Activated B cell treated with CpG ODN at 0.5 μM for 24 hours (primary cell): ENCODE measurements at regions of chr7 and their contacts with region 1.

Region 1: DNA sequence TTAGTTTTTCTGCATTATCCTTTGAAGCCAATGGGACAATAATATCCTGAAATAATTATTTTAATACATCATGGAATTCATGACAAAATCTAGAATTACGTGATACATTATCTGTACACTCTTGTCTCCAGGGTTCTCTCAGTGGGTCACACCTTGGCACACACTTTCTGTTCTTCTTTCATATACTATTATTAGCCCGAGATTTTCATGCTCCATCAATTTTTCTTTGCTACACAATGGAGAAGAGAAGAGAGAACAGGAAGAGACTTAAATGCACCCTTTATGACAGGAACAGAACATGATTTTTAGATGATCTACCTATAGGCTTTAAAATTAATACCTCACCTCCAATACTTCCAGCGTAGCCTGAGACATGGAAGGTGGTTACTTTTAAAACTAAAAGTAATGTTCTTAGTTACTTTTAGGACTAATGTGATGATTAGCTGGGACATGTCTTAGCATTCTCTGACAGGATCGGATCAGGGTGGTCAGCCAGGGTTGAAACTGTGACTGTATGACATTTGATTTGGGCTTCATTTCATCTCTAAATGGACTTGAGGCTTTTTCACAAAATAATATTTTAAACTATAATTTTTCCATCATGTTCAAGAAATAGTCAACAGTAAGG is 148.2 kb upstream of the WNT16 start:
- DNase-seq: no peak
- ATAC-seq: peak; percentile 89
- H3K4me3 Mint-ChIP-seq: peak overlapping the region; percentile 29
- H3K27ac Mint-ChIP-seq: peak overlapping the region; percentile 91
- H3K4me1 Mint-ChIP-seq: peaks cover 83% of the 10 kb centered on the region
- H3K27me3 Mint-ChIP-seq: no peaks in the 10 kb centered on the region
- CTCF ChIP-seq: no peak

Region 2: DNA sequence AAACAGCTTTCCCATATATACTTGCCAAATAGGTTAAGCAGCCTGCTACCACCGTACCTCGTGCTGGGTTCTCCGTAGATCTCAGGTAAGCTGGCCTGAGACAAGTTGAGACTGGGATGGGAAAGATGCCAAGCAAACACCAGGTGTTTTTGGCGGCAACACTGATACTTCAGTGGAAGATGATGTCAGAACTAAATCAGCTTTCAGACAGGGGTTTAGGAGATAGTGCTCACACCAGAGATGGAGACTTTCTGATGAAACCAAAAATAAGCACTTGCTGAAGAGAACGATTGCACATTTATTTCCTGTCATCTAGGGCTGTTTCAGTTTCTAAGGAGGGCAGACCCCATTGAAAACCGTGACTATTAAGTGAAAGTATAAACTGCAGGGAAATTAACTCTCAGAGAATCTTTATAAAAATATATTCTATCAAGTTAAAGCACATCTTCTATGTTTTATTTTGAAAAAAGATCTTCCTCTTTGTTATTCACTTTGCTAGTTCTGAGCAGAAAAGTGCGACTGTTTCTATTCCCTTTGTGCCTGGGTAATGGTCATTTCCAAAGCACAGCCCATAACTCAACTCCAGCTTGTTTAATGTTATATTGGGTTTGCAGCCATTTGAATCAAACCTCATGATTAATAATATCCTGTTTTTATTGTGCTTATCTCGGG is 42.2 kb before region 1 on chr7:
- CTCF ChIA-PET with region 1: no interaction called
- POLR2A ChIA-PET with region 1: interaction called, 6 read pairs
- intact Hi-C with region 1: loop called (anchors 1 kb)
- DNase-seq: peak; percentile 26
- ATAC-seq: peak; percentile 96
- H3K4me3 Mint-ChIP-seq: peak overlapping the region; percentile 94
- H3K27ac Mint-ChIP-seq: peak overlapping the region; percentile 96
- H3K4me1 Mint-ChIP-seq: peaks cover 30% of the 10 kb centered on the region
- H3K27me3 Mint-ChIP-seq: no peaks in the 10 kb centered on the region
- CTCF ChIP-seq: no peak

Region 3: GRCh38 chr7:121192834-121193233 is 12.3 kb after region 1 on chr7:
- CTCF ChIA-PET with region 1: no interaction called
- POLR2A ChIA-PET with region 1: interaction called, 9 read pairs
- intact Hi-C with region 1: loop called (anchors 1 kb)
- DNase-seq: no peak
- ATAC-seq: no peak
- H3K4me3 Mint-ChIP-seq: no peak overlapping the region
- H3K27ac Mint-ChIP-seq: no peak overlapping the region
- H3K4me1 Mint-ChIP-seq: peaks cover 35% of the 10 kb centered on the region
- H3K27me3 Mint-ChIP-seq: no peaks in the 10 kb centered on the region
- CTCF ChIP-seq: no peak

Region 4: GRCh38 chr7:121214657-121215056 is 34.1 kb after region 1 on chr7:
- CTCF ChIA-PET with region 1: no interaction called
- POLR2A ChIA-PET with region 1: no interaction called
- intact Hi-C with region 1: no loop called
- DNase-seq: no peak
- ATAC-seq: no peak
- H3K4me3 Mint-ChIP-seq: no peak overlapping the region
- H3K27ac Mint-ChIP-seq: no peak overlapping the region
- H3K4me1 Mint-ChIP-seq: peaks cover 25% of the 10 kb centered on the region
- H3K27me3 Mint-ChIP-seq: no peaks in the 10 kb centered on the region
- CTCF ChIP-seq: no peak

Region 5: DNA sequence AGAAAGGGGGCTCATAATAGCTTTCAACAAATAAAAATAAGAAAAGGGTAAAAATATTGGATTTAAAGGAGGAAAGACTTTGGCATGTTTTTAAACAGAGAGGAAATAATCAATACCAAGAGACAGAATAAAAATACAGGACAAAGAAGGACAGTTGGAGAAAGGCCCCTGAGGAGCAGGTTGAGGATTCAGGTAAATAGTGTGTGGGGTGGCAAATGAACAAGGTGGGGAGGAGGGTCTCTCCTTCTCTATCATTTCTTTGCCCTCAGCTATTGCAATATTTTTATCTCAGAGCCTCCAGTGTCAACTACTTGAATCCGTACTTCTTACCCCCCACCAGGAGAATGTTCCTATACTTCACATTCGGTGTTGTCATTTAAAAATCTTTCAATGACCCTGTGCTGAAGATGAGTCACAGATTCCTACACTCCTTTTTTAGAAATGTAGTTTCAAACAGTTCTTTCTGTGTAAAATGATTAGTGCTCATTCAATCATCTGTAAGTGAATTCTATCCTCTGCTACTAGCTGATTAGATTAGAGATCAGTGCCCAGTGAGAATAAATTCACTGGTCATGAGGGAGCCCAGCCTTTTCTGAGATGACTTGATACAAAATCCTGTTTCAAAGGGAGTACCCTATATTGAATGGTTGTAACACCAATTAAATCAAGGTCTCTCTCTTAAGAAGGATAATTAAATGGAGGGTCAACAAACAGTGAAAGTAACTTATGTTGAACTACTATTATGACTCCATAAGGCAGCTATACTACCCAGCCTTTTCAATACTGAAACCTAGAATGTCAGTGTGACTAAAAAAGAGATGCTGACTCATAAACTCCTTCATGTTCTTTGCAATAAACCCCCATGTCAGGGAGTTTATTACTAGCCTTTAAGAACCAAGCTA is 97.8 kb after region 1 on chr7:
- CTCF ChIA-PET with region 1: no interaction called
- POLR2A ChIA-PET with region 1: interaction called, 4 read pairs
- intact Hi-C with region 1: loop called (anchors 2 kb)
- DNase-seq: no peak
- ATAC-seq: peak; percentile 85
- H3K4me3 Mint-ChIP-seq: no peak overlapping the region
- H3K27ac Mint-ChIP-seq: peak overlapping the region; percentile 68
- H3K4me1 Mint-ChIP-seq: peaks cover 50% of the 10 kb centered on the region
- H3K27me3 Mint-ChIP-seq: no peaks in the 10 kb centered on the region
- CTCF ChIP-seq: no peak

Region 6: DNA sequence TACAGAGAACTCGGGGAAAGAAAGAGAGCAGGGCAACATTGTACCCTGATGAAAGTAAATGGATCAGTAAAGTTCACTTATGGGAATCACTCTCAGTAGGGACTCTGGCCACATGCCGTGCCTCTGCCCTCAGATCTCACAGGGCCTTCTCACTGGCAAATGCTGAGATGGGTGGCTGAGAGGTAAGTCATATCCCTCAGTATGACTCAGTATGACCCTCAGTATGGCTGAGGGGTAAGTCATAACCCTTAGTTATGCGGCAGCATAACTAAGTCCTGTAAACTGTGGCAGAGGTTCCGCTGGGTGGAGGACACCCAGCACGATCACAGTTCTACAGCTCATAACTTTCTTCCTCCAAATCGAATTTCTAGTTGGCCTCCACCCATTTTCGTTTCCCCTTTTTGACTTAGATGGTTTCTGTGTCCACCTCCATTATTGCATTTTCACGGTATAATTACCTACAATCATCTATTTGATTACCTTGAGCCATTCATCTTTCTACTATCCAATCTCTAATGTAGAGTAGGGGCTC is 121.7 kb after region 1 on chr7:
- CTCF ChIA-PET with region 1: no interaction called
- POLR2A ChIA-PET with region 1: interaction called, 5 read pairs
- intact Hi-C with region 1: loop called (anchors 1 kb)
- DNase-seq: no peak
- ATAC-seq: peak; percentile 97
- H3K4me3 Mint-ChIP-seq: peak overlapping the region; percentile 5
- H3K27ac Mint-ChIP-seq: peak overlapping the region; percentile 81
- H3K4me1 Mint-ChIP-seq: peaks cover 56% of the 10 kb centered on the region
- H3K27me3 Mint-ChIP-seq: no peaks in the 10 kb centered on the region
- CTCF ChIP-seq: no peak

Region 7: DNA sequence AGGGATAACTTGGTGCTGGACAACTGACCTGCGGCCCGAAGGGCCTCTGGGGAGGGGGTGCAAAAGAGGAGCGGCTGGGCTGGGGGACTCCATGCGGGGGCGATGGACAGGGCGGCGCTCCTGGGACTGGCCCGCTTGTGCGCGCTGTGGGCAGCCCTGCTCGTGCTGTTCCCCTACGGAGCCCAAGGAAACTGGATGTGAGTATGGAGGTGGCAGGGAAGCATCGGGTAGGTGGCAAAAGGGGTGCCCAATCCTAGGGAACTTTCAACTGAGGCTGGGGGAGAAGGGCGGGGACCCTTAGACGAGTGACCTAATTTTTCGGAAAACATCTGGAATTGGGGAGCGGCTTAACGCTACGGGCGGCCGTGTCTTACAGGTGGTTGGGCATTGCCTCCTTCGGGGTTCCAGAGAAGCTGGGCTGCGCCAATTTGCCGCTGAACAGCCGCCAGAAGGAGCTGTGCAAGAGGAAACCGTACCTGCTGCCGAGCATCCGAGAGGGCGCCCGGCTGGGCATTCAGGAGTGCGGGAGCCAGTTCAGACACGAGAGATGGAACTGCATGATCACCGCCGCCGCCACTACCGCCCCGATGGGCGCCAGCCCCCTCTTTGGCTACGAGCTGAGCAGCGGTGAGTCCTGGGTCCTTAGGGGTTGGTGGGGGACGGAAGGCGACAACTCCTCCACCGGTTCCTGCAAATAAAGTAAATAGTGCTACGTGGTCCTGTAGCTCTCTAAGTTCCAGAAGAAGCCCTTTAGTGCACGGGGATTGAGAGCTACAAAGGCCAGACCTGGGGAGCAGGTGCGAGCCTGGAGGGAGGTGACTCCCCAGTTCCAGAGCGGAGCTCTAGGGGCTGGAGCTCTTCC is 148.9 kb after region 1 on chr7:
- CTCF ChIA-PET with region 1: interaction called, 5 read pairs
- POLR2A ChIA-PET with region 1: interaction called, 3 read pairs
- intact Hi-C with region 1: loop called (anchors 1 kb)
- DNase-seq: peak; percentile 43
- ATAC-seq: peak; percentile 49
- H3K4me3 Mint-ChIP-seq: peak overlapping the region; percentile 91
- H3K27ac Mint-ChIP-seq: peak overlapping the region; percentile 85
- H3K4me1 Mint-ChIP-seq: peaks cover 36% of the 10 kb centered on the region
- H3K27me3 Mint-ChIP-seq: peaks cover 11% of the 10 kb centered on the region
- CTCF ChIP-seq: no peak

Region 8: DNA sequence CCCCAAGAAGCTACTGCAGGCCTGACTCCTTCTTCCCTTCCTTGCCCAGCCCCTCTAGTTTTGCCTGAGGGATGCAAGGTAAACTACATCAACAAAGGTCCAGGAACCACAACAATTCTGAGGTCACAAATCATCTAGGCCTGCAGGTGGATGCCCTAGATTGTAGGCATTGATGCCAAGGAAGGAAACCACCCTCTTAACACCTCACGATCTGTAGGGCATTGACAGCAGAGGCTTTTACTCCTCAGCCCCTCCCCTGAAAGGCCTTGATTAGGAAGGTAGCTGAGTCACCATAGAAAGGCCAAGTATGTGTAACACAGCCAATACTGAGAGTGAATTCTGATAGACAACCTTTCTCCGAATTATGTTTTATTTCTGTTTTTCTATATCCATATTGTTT is 262.3 kb after region 1 on chr7:
- CTCF ChIA-PET with region 1: no interaction called
- POLR2A ChIA-PET with region 1: no interaction called
- intact Hi-C with region 1: loop called (anchors 5 kb)
- DNase-seq: no peak
- ATAC-seq: no peak
- H3K4me3 Mint-ChIP-seq: no peak overlapping the region
- H3K27ac Mint-ChIP-seq: no peak overlapping the region
- H3K4me1 Mint-ChIP-seq: peaks cover 34% of the 10 kb centered on the region
- H3K27me3 Mint-ChIP-seq: no peaks in the 10 kb centered on the region
- CTCF ChIP-seq: no peak